Calu3 (cell line): ENCODE measurements at regions of chr1 and their contacts with region 1.

Region 1: DNA sequence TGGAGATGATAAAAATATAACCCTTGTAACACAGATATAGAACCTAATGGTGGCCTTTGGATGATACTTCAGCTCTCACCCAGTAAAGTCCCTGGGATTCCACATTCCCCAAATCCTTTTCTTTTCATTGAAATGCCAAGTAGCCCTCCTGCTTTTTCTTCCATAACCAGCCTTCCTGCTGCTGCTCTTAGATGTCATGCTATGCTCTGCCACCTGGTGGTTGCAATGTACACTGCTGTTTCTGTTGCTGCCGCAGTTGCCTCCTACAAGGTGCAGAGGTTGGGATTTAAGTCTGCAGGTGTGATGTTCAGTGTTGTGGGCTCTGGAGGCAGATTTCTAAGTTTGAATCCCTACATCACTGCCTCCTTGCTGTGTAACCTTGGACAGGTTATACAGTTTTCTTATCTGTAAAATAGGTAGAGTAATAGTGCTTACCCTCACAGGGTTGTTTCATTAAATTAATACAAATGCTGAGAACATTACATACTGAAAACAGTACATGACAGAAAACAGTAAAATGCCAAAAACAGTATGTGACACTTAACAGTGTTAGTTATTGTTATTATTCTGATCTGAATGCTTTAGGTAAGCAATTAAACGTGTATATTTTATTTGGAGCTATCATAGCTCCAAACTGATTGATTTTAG is 64.3 kb downstream of the CAMSAP2 start:
- DNase-seq: peak; percentile 86
- H3K4me3 Mint-ChIP-seq: no peak overlapping the region
- H3K27ac Mint-ChIP-seq: no peak overlapping the region
- H3K4me1 Mint-ChIP-seq: peaks cover 8% of the 10 kb centered on the region
- H3K27me3 Mint-ChIP-seq: no peaks in the 10 kb centered on the region
- CTCF ChIP-seq: peak; percentile 97

Region 2: GRCh38 chr1:200558866-200559459 is 244.0 kb before region 1 on chr1:
- CTCF ChIA-PET with region 1: interaction called, 3 read pairs
- intact Hi-C with region 1: loop called (anchors 2 kb)
- DNase-seq: peak; percentile 43
- H3K4me3 Mint-ChIP-seq: no peak overlapping the region
- H3K27ac Mint-ChIP-seq: no peak overlapping the region
- H3K4me1 Mint-ChIP-seq: peaks cover 20% of the 10 kb centered on the region
- H3K27me3 Mint-ChIP-seq: no peaks in the 10 kb centered on the region
- CTCF ChIP-seq: no peak

Region 3: DNA sequence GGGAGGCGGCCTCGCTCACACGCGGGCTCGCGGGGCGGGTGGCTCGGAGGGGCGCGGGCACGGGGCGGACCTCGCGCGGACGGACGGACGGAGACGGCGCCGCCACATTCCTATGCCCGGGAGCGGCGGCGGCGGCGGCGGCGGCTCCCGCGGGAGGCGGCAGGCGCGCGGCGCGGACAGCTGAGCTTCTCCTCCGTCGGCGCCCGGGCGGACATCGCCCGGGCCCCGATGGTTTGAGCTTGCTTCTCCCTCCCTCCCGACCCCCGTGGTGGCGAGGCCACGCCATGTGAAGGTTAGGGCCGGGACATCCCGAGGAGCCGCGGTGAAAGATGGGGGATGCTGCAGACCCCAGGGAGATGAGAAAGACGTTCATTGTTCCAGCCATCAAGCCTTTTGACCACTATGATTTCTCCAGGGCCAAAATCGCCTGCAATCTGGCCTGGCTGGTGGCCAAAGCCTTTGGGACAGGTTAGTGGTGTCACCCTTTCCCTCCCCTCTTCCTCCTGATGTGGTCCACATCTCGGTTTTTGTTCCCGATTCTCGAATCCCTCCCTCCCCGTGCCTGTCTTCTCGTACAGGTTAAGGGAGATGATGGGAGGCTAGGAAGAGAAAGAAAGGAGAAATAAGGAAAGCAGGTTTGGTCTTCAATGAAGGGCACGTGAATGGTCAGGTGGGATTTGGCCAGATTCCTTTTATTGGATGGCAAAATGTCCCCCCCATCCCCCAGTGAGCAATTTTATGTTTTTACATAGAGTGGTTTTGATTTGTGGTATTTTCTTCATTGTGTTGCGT is 63.3 kb before region 1 on chr1:
- CTCF ChIA-PET with region 1: no interaction called
- intact Hi-C with region 1: loop called (anchors 2 kb)
- DNase-seq: peak; percentile 39
- H3K4me3 Mint-ChIP-seq: peak overlapping the region; percentile 92
- H3K27ac Mint-ChIP-seq: peak overlapping the region; percentile 88
- H3K4me1 Mint-ChIP-seq: peaks cover 31% of the 10 kb centered on the region
- H3K27me3 Mint-ChIP-seq: no peaks in the 10 kb centered on the region
- CTCF ChIP-seq: no peak